Activated CD4-positive, alpha-beta memory T cell treated with anti-CD3 and anti-CD28 coated beads for 36 hours (primary cell): ENCODE measurements at regions of chr14 and their contacts with region 1.

Region 1: DNA sequence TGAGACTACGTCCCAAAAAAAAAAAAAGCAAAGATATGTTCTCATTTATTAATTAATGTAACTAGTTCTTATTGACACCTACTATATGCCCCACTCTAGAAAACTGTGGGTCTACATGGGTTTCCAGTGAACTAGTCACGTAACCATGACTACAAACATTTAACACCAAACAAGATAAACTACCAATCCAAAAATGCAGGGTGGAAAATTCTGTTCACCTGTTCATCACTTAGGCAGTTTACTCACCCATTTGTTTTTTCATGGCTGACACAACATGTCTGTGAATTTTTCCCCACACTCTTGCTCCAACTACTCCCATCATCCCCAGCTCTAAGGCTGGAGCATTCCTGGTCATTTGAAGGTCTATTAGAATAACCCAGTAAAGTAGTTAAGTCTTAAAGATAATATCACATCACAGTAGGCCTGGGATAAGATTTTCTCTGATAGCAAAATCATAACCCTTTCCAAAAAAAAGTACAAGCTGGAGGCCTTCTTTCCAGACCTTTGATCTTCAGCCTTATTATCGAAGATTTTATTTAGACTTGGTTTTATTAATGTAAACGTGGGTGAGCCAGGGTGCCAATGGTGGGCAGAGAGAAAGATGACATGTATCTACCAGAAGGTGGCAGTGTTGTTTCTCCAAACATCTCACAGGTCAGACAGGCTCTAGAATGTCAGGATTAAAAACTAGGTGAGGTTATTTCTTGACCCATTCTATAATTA is 61.6 kb upstream of the DAAM1 start:
- DNase-seq: peak; percentile 15
- H3K4me3 Mint-ChIP-seq: no peak overlapping the region
- H3K27ac Mint-ChIP-seq: no peak overlapping the region
- H3K4me1 Mint-ChIP-seq: no peaks in the 10 kb centered on the region
- H3K27me3 Mint-ChIP-seq: peaks cover 16% of the 10 kb centered on the region

Region 2: GRCh38 chr14:59103396-59103795 is 23.5 kb before region 1 on chr14:
- CTCF ChIA-PET with region 1: no interaction called
- POLR2A ChIA-PET with region 1: no interaction called
- intact Hi-C with region 1: no loop called
- DNase-seq: no peak
- H3K4me3 Mint-ChIP-seq: no peak overlapping the region
- H3K27ac Mint-ChIP-seq: no peak overlapping the region
- H3K4me1 Mint-ChIP-seq: no peaks in the 10 kb centered on the region
- H3K27me3 Mint-ChIP-seq: peaks cover 11% of the 10 kb centered on the region

Region 3: DNA sequence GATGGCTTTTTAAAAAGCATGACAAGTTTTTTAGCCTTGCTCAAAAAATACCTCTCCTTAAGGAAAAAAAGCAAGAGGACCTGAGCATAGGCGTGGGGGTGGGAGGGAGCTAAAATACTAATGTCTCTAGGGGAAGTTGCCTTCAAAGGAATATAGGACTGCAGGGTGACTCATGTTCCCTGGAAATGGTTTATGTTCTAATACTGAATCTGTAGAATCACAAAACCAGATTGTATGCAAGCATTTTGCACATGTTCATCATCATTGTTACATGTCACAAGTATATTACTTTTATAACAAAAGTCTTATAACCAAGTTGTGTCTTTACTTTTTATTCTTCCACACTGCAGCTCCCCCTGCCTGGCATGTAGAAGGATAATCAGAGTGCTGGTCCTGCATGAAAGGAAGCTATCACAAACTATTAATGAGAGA is 301.7 kb after region 1 on chr14:
- CTCF ChIA-PET with region 1: interaction called, 4 read pairs
- POLR2A ChIA-PET with region 1: no interaction called
- intact Hi-C with region 1: loop called (anchors 5 kb)
- DNase-seq: peak; percentile 10
- H3K4me3 Mint-ChIP-seq: no peak overlapping the region
- H3K27ac Mint-ChIP-seq: no peak overlapping the region
- H3K4me1 Mint-ChIP-seq: peaks cover 3% of the 10 kb centered on the region
- H3K27me3 Mint-ChIP-seq: peaks cover 5% of the 10 kb centered on the region

Region 4: GRCh38 chr14:59438195-59438647 is 311.4 kb after region 1 on chr14:
- CTCF ChIA-PET with region 1: interaction called, 36 read pairs
- POLR2A ChIA-PET with region 1: no interaction called
- intact Hi-C with region 1: no loop called
- DNase-seq: no peak
- H3K4me3 Mint-ChIP-seq: no peak overlapping the region
- H3K27ac Mint-ChIP-seq: no peak overlapping the region
- H3K4me1 Mint-ChIP-seq: no peaks in the 10 kb centered on the region
- H3K27me3 Mint-ChIP-seq: no peaks in the 10 kb centered on the region